ENCODE measurements at regions of chr4 and their contacts with region 1.

Region 1: DNA sequence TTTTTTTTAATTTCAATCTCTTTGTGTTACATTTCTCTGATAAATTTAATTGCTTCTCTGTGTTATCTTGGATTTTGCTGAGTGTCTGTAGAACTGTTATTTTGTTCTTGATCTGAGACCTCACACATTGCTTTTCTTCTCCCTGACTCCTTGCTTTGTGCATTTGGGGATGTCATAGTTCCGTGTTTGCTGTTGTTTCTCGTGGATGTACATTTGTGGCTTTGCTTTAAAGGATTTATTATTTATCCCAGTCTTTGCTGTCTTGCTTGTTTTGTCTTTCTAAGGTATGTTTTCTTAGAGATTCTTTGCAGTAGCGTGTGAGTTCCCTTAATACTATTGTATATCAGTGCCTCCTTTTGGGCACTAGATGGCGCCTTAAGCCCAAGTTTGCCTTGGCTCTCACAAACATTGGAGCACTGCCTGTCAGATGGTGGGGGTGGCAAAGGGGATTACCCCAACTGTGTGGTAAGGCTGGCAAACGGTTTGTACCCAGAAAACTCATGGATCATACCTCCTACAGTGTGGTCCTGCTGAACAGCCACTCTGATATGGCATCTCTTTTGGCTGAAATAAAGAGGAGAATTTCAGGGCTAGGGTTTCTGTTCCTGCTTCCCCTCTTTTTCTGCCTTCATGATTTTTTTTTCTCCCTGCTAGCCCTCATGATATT is 96.4 kb downstream of the PGRMC2 start:
- DNase-seq: peak; percentile 55
- H3K4me3 ChIP-seq: no peak overlapping the region
- H3K27ac ChIP-seq: no peak overlapping the region
- H3K4me1 ChIP-seq: no peaks in the 10 kb centered on the region
- H3K27me3 ChIP-seq: no peaks in the 10 kb centered on the region
- CTCF ChIP-seq: peak; percentile 86 to 91

Region 2: GRCh38 chr4:127417886-127418535 is 773.2 kb before region 1 on chr4:
- CTCF ChIA-PET with region 1: no interaction called
- dilution Hi-C with region 1: no loop called
- in situ Hi-C with region 1: no loop called
- intact Hi-C with region 1: no loop called
- DNase-seq: no peak
- H3K4me3 ChIP-seq: no peak overlapping the region
- H3K27ac ChIP-seq: no peak overlapping the region
- H3K4me1 ChIP-seq: no peaks in the 10 kb centered on the region
- H3K27me3 ChIP-seq: no peaks in the 10 kb centered on the region
- CTCF ChIP-seq: no peak

Region 3: GRCh38 chr4:128220286-128221235 is 29.3 kb after region 1 on chr4:
- CTCF ChIA-PET with region 1: no interaction called
- dilution Hi-C with region 1: no loop called
- in situ Hi-C with region 1: no loop called
- intact Hi-C with region 1: loop called (anchors 2 kb)
- DNase-seq: peak; percentile 42
- H3K4me3 ChIP-seq: no peak overlapping the region
- H3K27ac ChIP-seq: no peak overlapping the region
- H3K4me1 ChIP-seq: peaks cover 6% of the 10 kb centered on the region
- H3K27me3 ChIP-seq: no peaks in the 10 kb centered on the region
- CTCF ChIP-seq: peak; percentile 23 to 39

Region 4: DNA sequence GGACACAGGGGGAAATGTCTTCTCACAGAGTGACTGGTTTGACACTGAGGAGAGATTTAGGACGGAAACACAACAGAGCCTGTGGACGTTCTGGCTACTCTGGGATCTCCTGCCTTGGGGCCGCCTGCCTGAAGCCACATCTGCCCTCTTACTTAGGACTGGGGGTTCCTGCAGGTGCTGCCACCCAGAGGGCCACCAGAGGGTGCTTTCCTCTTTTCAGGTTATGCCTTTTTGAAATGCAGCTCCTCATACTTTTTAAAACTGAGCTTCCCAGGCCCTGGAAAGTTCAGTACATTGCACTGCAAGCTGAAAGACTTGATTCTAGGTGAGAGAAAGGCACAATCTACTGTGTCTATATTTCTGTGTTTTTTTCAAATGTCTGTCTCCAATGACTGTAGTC is 188.6 kb after region 1 on chr4:
- CTCF ChIA-PET with region 1: no interaction called
- dilution Hi-C with region 1: no loop called
- in situ Hi-C with region 1: no loop called
- intact Hi-C with region 1: loop called (anchors 1 kb)
- DNase-seq: no peak
- H3K4me3 ChIP-seq: no peak overlapping the region
- H3K27ac ChIP-seq: no peak overlapping the region
- H3K4me1 ChIP-seq: peaks cover 9% of the 10 kb centered on the region
- H3K27me3 ChIP-seq: no peaks in the 10 kb centered on the region
- CTCF ChIP-seq: peak; percentile 66 to 69

Region 5: GRCh38 chr4:128565565-128566186 is 374.4 kb after region 1 on chr4:
- CTCF ChIA-PET with region 1: no interaction called
- dilution Hi-C with region 1: no loop called
- in situ Hi-C with region 1: no loop called
- intact Hi-C with region 1: loop called (anchors 2 kb)
- DNase-seq: no peak
- H3K4me3 ChIP-seq: no peak overlapping the region
- H3K27ac ChIP-seq: no peak overlapping the region
- H3K4me1 ChIP-seq: peaks cover 6% of the 10 kb centered on the region
- H3K27me3 ChIP-seq: no peaks in the 10 kb centered on the region
- CTCF ChIP-seq: peak; percentile 37 to 70